PC-9 (cell line): ENCODE measurements at regions of chr2 and their contacts with region 1.

Region 1: DNA sequence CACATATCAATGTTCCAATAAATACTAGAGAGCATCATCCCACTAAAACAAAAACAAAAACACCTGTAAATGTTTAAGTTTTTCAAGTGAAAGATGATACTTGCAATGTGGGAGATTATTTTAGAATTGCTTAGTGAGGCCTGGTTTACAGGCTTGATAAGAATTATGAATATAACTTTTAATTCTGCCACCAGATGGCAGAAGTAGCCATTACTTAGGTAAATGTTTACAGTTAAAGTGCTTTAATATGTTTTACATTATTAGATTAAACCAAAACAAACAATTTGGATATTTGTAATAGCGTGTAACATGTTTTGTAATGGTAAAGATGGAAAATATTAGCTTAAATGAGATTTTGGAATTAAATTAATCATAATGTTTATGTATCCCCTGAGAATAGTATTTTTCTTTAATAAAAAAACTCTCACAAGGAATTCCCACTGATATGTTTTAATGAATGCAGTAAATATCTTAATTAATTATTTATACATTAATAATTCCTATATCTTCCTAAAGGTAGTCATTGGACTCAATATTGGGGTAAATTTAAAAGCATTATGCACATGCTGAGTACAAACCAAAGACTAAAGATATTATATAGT is 522.0 kb downstream of the SPAG16 start:
- DNase-seq: no peak
- H3K4me3 ChIP-seq: no peak overlapping the region
- H3K27ac ChIP-seq: no peak overlapping the region
- H3K4me1 ChIP-seq: no peaks in the 10 kb centered on the region
- H3K27me3 ChIP-seq: no peaks in the 10 kb centered on the region
- CTCF ChIP-seq: peak; percentile 84

Region 2: DNA sequence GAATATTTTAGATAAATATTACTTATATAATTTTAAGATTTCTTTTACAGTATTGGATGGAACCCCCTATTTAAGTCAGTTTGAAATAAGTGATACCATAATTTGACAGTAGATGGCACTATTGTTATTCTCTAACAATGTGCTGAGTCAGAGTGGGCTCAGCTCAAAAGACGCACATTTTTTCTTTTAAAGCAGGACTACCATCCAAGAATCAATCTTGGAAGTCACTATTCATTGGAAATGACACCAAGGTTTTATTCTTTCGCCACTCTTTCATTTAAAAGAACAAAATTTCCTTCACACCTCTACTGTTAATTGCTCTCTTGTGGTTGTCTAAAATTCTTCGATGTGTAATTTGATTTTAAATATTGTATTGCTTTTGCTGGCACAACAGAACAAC is 554.6 kb before region 1 on chr2:
- CTCF ChIA-PET with region 1: no interaction called
- POLR2A ChIA-PET with region 1: no interaction called
- intact Hi-C with region 1: loop called (anchors 10 kb)
- DNase-seq: peak in 1 of 2 experiments; percentile 58
- H3K4me3 ChIP-seq: no peak overlapping the region
- H3K27ac ChIP-seq: peak overlapping the region; percentile 53
- H3K4me1 ChIP-seq: 0 out of 2 replicates have a peak, but pooled peaks cover 6% of the 10 kb centered on the region
- H3K27me3 ChIP-seq: no peaks in the 10 kb centered on the region
- CTCF ChIP-seq: peak; percentile 75

Region 3: GRCh38 chr2:213818436-213818835 is 12.2 kb after region 1 on chr2:
- CTCF ChIA-PET with region 1: no interaction called
- POLR2A ChIA-PET with region 1: no interaction called
- intact Hi-C with region 1: no loop called
- DNase-seq: no peak
- H3K4me3 ChIP-seq: no peak overlapping the region
- H3K27ac ChIP-seq: no peak overlapping the region
- H3K4me1 ChIP-seq: no peaks in the 10 kb centered on the region
- H3K27me3 ChIP-seq: no peaks in the 10 kb centered on the region
- CTCF ChIP-seq: no peak

Region 4: GRCh38 chr2:213834331-213834730 is 28.1 kb after region 1 on chr2:
- CTCF ChIA-PET with region 1: no interaction called
- POLR2A ChIA-PET with region 1: no interaction called
- intact Hi-C with region 1: no loop called
- DNase-seq: no peak
- H3K4me3 ChIP-seq: no peak overlapping the region
- H3K27ac ChIP-seq: no peak overlapping the region
- H3K4me1 ChIP-seq: peaks cover 11% of the 10 kb centered on the region; the same call in 1 of the 2 replicates
- H3K27me3 ChIP-seq: no peaks in the 10 kb centered on the region
- CTCF ChIP-seq: no peak

Region 5: GRCh38 chr2:214410918-214411554 is 604.8 kb after region 1 on chr2 and contains the start of gene VWC2L:
- CTCF ChIA-PET with region 1: no interaction called
- POLR2A ChIA-PET with region 1: no interaction called
- intact Hi-C with region 1: loop called (anchors 10 kb)
- DNase-seq: peak; percentile 47 to 75
- H3K4me3 ChIP-seq: no peak within 1 kb of the TSS
- H3K27ac ChIP-seq: no peak within 1 kb of the TSS
- H3K4me1 ChIP-seq: no peaks in the 10 kb centered on the region
- H3K27me3 ChIP-seq: no peaks in the 10 kb centered on the region
- CTCF ChIP-seq: no peak
- total RNA-seq, gene VWC2L: not detected in 2 replicates

Region 6: GRCh38 chr2:215002500-215002899 is 1196.3 kb after region 1 on chr2:
- CTCF ChIA-PET with region 1: no interaction called
- POLR2A ChIA-PET with region 1: no interaction called
- intact Hi-C with region 1: loop called (anchors 1 kb)
- DNase-seq: peak in 1 of 2 experiments; percentile 24
- H3K4me3 ChIP-seq: no peak overlapping the region
- H3K27ac ChIP-seq: no peak overlapping the region
- H3K4me1 ChIP-seq: no peaks in the 10 kb centered on the region
- H3K27me3 ChIP-seq: no peaks in the 10 kb centered on the region
- CTCF ChIP-seq: peak; percentile 89